Calu3 (cell line): ENCODE measurements at regions of chr1 and their contacts with region 1.

Region 1: GRCh38 chr1:216961516-216961915 is 238.3 kb upstream of the ESRRG start:
- DNase-seq: no peak
- H3K4me3 Mint-ChIP-seq: no peak overlapping the region
- H3K27ac Mint-ChIP-seq: no peak overlapping the region
- H3K4me1 Mint-ChIP-seq: no peaks in the 10 kb centered on the region
- H3K27me3 Mint-ChIP-seq: no peaks in the 10 kb centered on the region
- CTCF ChIP-seq: no peak

Region 2: GRCh38 chr1:216750012-216750627 is 211.4 kb before region 1 on chr1:
- CTCF ChIA-PET with region 1: no interaction called
- intact Hi-C with region 1: loop called (anchors 2 kb)
- DNase-seq: peak; percentile 29
- H3K4me3 Mint-ChIP-seq: no peak overlapping the region
- H3K27ac Mint-ChIP-seq: no peak overlapping the region
- H3K4me1 Mint-ChIP-seq: no peaks in the 10 kb centered on the region
- H3K27me3 Mint-ChIP-seq: no peaks in the 10 kb centered on the region
- CTCF ChIP-seq: peak; percentile 59

Region 3: GRCh38 chr1:217078078-217078690 is 116.7 kb after region 1 on chr1:
- CTCF ChIA-PET with region 1: no interaction called
- intact Hi-C with region 1: no loop called
- DNase-seq: no peak
- H3K4me3 Mint-ChIP-seq: no peak overlapping the region
- H3K27ac Mint-ChIP-seq: no peak overlapping the region
- H3K4me1 Mint-ChIP-seq: no peaks in the 10 kb centered on the region
- H3K27me3 Mint-ChIP-seq: peaks cover 11% of the 10 kb centered on the region
- CTCF ChIP-seq: no peak

Region 4: GRCh38 chr1:217115404-217116380 is 154.2 kb after region 1 on chr1:
- CTCF ChIA-PET with region 1: no interaction called
- intact Hi-C with region 1: no loop called
- DNase-seq: no peak
- H3K4me3 Mint-ChIP-seq: no peak overlapping the region
- H3K27ac Mint-ChIP-seq: no peak overlapping the region
- H3K4me1 Mint-ChIP-seq: no peaks in the 10 kb centered on the region
- H3K27me3 Mint-ChIP-seq: peaks cover 8% of the 10 kb centered on the region
- CTCF ChIP-seq: no peak

Region 5: DNA sequence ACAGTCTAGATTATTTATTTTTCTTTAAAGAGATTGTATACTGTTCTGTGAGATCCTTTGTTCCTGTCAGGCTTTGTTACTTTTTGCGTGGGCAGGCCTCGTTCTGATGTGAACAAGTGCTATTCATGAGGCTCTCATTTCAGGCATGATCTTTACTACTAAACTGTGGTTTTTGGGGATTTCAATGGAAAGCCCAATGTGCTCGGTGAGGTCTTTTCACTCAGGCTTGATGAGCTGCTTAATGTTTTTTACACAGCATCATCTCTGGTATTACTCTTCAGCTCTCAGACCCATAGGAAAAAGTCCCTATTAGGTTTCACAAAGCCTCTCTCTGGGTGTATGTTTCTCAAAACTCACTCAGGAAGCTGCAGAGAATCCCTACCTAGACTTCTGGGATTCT is 250.0 kb after region 1 on chr1:
- CTCF ChIA-PET with region 1: no interaction called
- intact Hi-C with region 1: no loop called
- DNase-seq: no peak
- H3K4me3 Mint-ChIP-seq: no peak overlapping the region
- H3K27ac Mint-ChIP-seq: no peak overlapping the region
- H3K4me1 Mint-ChIP-seq: no peaks in the 10 kb centered on the region
- H3K27me3 Mint-ChIP-seq: no peaks in the 10 kb centered on the region
- CTCF ChIP-seq: no peak

Region 6: GRCh38 chr1:217311766-217312165 is 350.2 kb after region 1 on chr1:
- CTCF ChIA-PET with region 1: no interaction called
- intact Hi-C with region 1: loop called (anchors 1 kb)
- DNase-seq: peak; percentile 13
- H3K4me3 Mint-ChIP-seq: no peak overlapping the region
- H3K27ac Mint-ChIP-seq: no peak overlapping the region
- H3K4me1 Mint-ChIP-seq: no peaks in the 10 kb centered on the region
- H3K27me3 Mint-ChIP-seq: no peaks in the 10 kb centered on the region
- CTCF ChIP-seq: no peak

Region 7: DNA sequence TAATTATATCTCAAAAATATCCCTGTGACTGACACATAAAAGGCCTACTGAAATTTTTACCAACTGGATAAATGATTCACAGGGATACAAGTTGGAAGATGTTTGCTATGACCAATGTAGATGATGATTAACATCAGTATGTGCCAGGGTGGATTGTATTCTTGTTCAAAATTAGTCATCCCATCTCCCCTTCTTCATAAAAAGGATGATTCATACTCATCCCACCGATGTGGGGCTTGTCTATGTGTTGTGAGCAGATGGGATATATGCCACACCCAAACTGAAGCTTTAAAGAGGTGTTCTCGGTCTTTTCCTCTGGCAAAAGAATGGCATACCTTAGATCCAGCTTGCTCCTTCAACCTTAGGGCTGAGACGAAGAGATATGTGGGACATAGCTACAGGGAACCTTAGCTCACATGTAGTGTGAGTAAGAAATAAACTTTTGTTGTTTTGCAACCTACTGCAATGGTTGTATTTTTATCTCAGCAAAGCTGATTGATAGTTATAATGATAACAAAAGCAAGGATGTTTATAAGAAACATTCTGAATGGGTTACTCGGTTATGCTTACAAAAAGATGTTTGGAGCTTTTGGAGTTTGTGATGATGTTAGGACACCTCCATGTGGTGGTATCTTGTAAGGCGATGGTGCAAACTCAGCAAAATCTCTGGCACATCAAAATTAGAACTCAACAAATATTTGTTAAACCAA is 699.0 kb after region 1 on chr1:
- CTCF ChIA-PET with region 1: no interaction called
- intact Hi-C with region 1: loop called (anchors 5 kb)
- DNase-seq: no peak
- H3K4me3 Mint-ChIP-seq: no peak overlapping the region
- H3K27ac Mint-ChIP-seq: no peak overlapping the region
- H3K4me1 Mint-ChIP-seq: peaks cover 13% of the 10 kb centered on the region
- H3K27me3 Mint-ChIP-seq: no peaks in the 10 kb centered on the region
- CTCF ChIP-seq: no peak

Region 8: DNA sequence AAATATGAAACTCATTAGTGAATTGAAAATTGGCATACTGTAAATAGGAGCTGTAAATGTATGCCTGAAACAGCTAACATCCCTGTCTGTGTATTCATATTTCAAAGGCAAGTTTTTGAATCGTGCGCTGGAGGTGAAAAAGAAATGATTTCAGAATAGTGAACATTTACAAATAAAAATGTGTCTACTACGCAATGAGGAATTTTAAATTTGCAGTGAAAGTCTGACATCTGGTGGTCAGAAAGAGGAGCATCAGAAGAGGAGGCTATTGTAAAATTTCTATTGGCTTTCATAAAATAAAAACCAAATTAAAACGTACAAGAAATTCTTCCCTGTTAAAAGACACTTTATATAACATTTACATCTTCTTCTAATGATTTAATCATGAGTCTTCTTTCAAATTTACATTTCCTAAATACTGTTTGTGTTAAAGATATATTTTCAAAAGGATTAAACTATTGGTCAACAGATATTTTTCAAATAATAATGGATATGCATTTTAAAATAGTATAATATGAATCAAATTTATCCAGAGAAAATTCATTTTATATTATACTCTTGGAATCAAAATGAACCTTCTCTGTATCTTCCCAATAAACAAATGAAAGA is 1209.9 kb after region 1 on chr1:
- CTCF ChIA-PET with region 1: no interaction called
- intact Hi-C with region 1: loop called (anchors 5 kb)
- DNase-seq: no peak
- H3K4me3 Mint-ChIP-seq: no peak overlapping the region
- H3K27ac Mint-ChIP-seq: no peak overlapping the region
- H3K4me1 Mint-ChIP-seq: peaks cover under 1% of the 10 kb centered on the region
- H3K27me3 Mint-ChIP-seq: peaks cover 7% of the 10 kb centered on the region
- CTCF ChIP-seq: peak; percentile 65